H1 (cell line): ENCODE measurements at regions of chr6 and their contacts with region 1.

Region 1: DNA sequence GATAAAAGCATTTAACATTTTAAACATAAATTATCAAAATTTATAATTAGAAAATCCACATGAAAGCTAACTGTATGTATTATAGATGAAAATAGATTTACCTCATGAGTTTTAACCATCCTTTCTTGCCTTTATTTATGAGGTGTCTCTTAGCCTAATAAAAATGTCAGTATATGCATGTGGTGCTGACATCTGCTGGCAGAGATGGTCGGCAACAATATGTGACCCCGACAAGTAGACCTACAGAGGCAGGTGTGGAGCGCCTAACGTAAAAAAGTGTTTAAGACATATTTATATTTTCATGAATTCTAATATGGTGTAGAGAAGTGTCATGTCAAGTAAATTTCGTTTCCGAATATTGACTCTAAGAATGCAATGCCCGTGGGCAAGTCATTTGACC is 149.0 kb upstream of the FUT9 start:
- DNase-seq: peak in 1 of 2 experiments; percentile 5
- H3K4me3 ChIP-seq: no peak overlapping the region
- H3K27ac ChIP-seq: no peak overlapping the region
- H3K4me1 ChIP-seq: no peaks in the 10 kb centered on the region
- H3K27me3 ChIP-seq: no peaks in the 10 kb centered on the region
- CTCF ChIP-seq: peak; percentile 52 to 70 (median 55)
- EP300 ChIP-seq: no peak
- POLR2A ChIP-seq: no peak
- RAD21 ChIP-seq: peak; percentile 74 to 76

Region 2: DNA sequence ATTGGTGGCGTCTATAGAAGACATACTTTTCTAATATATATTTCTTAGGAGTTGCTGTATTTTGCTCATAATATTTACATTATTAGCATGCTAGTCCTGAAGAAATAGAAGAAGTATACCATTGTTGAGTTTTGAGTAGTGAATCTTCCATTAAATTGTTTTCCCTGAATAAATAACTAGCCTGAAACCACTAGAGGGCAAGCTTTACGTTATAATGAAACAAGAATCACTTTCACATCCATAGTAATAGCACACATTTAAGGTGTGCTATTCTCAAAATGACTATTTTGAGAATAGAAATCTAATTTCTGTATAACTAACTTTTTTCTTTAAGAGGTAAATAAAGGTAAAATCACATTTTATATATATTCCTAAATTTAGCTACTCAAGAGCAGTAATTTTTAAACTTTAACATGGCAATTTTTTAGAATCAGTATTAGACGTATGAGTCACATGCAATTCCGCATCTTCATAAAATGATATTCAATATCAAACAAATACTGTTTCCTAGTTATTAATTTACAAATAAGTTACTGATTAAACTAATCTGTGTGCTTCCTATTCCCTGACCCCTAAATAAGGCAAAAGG is 502.6 kb before region 1 on chr6:
- CTCF ChIA-PET with region 1: interaction called, 17 read pairs
- POLR2A ChIA-PET with region 1: no interaction called
- DNase-seq: no peak
- H3K4me3 ChIP-seq: no peak overlapping the region
- H3K27ac ChIP-seq: no peak overlapping the region
- H3K4me1 ChIP-seq: peaks cover 0 to 9% (median 6%) of the 10 kb centered on the region in 4 experiments; a peak in 4 of 7 replicates
- H3K27me3 ChIP-seq: no peaks in the 10 kb centered on the region
- CTCF ChIP-seq: peak in 2 of 3 experiments; percentile 13 to 51; a peak in 2 of 4 replicates
- EP300 ChIP-seq: no peak
- POLR2A ChIP-seq: no peak
- RAD21 ChIP-seq: peak; percentile 61 to 75

Region 3: GRCh38 chr6:95648638-95649037 is 218.1 kb before region 1 on chr6:
- CTCF ChIA-PET with region 1: interaction called, 11 read pairs
- POLR2A ChIA-PET with region 1: no interaction called
- DNase-seq: no peak
- H3K4me3 ChIP-seq: no peak overlapping the region
- H3K27ac ChIP-seq: no peak overlapping the region
- H3K4me1 ChIP-seq: 0 out of 7 replicates have a peak, but pooled peaks cover 0 to 2% (median 0%) of the 10 kb centered on the region in 4 experiments
- H3K27me3 ChIP-seq: no peaks in the 10 kb centered on the region
- CTCF ChIP-seq: peak in 2 of 3 experiments; percentile 30 to 54; a peak in 2 of 4 replicates
- EP300 ChIP-seq: no peak
- POLR2A ChIP-seq: no peak
- RAD21 ChIP-seq: peak; percentile 81 to 85

Region 4: DNA sequence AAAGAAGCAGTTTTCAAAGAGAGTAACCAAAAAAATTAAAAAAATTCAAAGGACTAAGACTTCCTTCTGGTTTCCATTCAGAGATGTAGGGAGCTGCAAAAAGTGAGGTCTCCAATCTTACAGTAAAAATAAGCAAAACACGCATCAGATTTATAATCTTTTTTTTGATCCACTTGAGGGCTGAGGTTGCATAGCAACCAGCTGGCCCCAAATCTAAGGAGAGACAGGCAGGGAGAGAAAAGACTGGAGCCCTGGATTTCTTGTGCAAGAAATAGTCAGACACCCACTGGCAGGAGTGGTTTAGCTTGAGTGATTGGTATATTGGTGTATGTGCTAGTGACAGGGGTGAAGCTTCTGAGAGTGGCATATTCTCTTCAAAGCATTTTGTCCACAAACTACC is 13.1 kb after region 1 on chr6:
- CTCF ChIA-PET with region 1: interaction called, 10 read pairs
- POLR2A ChIA-PET with region 1: no interaction called
- DNase-seq: no peak
- H3K4me3 ChIP-seq: no peak overlapping the region
- H3K27ac ChIP-seq: no peak overlapping the region
- H3K4me1 ChIP-seq: no peaks in the 10 kb centered on the region
- H3K27me3 ChIP-seq: no peaks in the 10 kb centered on the region
- CTCF ChIP-seq: no peak
- EP300 ChIP-seq: no peak
- POLR2A ChIP-seq: no peak
- RAD21 ChIP-seq: no peak

Region 5: DNA sequence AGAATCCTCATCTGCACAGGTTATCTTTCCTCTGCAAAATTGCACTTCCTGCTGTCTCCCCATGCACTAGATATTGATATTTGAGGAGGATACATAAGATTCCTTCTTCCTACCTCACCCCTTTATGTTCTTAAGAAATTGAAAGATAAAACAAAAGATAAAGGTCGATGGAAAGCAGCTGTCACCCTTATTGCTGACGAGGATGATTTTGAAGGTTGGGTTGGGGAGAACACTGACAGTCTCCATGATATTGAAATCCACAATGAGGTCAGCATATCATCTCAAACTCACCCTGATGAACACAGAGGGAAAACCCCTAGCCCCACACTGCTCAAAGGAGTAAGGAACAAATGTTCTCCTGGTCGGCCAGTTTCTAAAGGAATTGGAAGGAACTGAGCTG is 38.4 kb after region 1 on chr6:
- CTCF ChIA-PET with region 1: no interaction called
- POLR2A ChIA-PET with region 1: no interaction called
- DNase-seq: no peak
- H3K4me3 ChIP-seq: no peak overlapping the region
- H3K27ac ChIP-seq: no peak overlapping the region
- H3K4me1 ChIP-seq: no peaks in the 10 kb centered on the region
- H3K27me3 ChIP-seq: no peaks in the 10 kb centered on the region
- CTCF ChIP-seq: no peak
- EP300 ChIP-seq: no peak
- POLR2A ChIP-seq: no peak
- RAD21 ChIP-seq: no peak

Region 6: GRCh38 chr6:95978230-95978629 is 111.5 kb after region 1 on chr6:
- CTCF ChIA-PET with region 1: no interaction called
- POLR2A ChIA-PET with region 1: no interaction called
- DNase-seq: no peak
- H3K4me3 ChIP-seq: no peak overlapping the region
- H3K27ac ChIP-seq: no peak overlapping the region
- H3K4me1 ChIP-seq: no peaks in the 10 kb centered on the region
- H3K27me3 ChIP-seq: no peaks in the 10 kb centered on the region
- CTCF ChIP-seq: no peak
- EP300 ChIP-seq: no peak
- POLR2A ChIP-seq: no peak
- RAD21 ChIP-seq: no peak

Region 7: GRCh38 chr6:95991906-95992305 is 125.2 kb after region 1 on chr6:
- CTCF ChIA-PET with region 1: no interaction called
- POLR2A ChIA-PET with region 1: no interaction called
- DNase-seq: no peak
- H3K4me3 ChIP-seq: no peak overlapping the region
- H3K27ac ChIP-seq: no peak overlapping the region
- H3K4me1 ChIP-seq: no peaks in the 10 kb centered on the region
- H3K27me3 ChIP-seq: no peaks in the 10 kb centered on the region
- CTCF ChIP-seq: no peak
- EP300 ChIP-seq: no peak
- POLR2A ChIP-seq: no peak
- RAD21 ChIP-seq: no peak